ENCODE measurements at regions of chr1 and their contacts with region 1.

Region 1: GRCh38 chr1:61049850-61050540 is 32.4 kb upstream of the NFIA start:
- DNase-seq: peak; percentile 97
- H3K4me3 ChIP-seq: peak overlapping the region; percentile 66 to 94 (median 90)
- H3K27ac ChIP-seq: peak overlapping the region; percentile 94 to 99 (median 98)
- H3K4me1 ChIP-seq: peaks cover 0 to 41% (median 35%) of the 10 kb centered on the region in 4 donors
- H3K27me3 ChIP-seq: no peaks in the 10 kb centered on the region
- CTCF ChIP-seq: peak; percentile 93 to 96 (median 96)
- EP300 ChIP-seq: no peak
- POLR2A ChIP-seq: peak; percentile 27 to 36

Region 2: DNA sequence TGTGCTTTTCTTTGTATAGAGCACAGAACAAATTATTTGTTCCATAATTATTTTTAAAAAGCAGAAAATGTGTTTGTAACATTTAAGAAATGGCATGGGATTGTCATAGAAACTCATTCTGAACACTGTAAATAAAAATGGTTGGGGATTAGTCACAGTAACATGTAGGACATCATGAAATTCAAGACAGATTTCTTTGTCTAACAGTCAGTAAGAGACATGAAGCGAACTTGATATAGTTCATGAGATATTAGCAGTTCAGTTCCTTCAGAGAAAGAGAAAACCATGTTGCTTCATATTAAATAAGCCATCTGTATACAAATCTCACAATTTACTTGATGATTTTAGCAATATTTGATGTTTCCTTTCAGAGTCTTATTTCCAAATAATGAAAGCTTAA is 52.0 kb after region 1 on chr1:
- intact Hi-C with region 1: no loop called
- DNase-seq: no peak
- H3K4me3 ChIP-seq: peak overlapping the region in 2 of 4 donors; percentile 1 to 11
- H3K27ac ChIP-seq: peak overlapping the region; percentile 38 to 64 (median 48)
- H3K4me1 ChIP-seq: peaks cover 0 to 39% (median 22%) of the 10 kb centered on the region in 4 donors
- H3K27me3 ChIP-seq: no peaks in the 10 kb centered on the region
- CTCF ChIP-seq: no peak
- EP300 ChIP-seq: no peak
- POLR2A ChIP-seq: no peak

Region 3: GRCh38 chr1:61244114-61244513 is 194.1 kb after region 1 on chr1:
- intact Hi-C with region 1: loop called (anchors 2 kb)
- DNase-seq: no peak
- H3K4me3 ChIP-seq: no peak overlapping the region
- H3K27ac ChIP-seq: peak overlapping the region; percentile 77 to 87 (median 83)
- H3K4me1 ChIP-seq: peaks cover 0 to 66% (median 49%) of the 10 kb centered on the region in 4 donors
- H3K27me3 ChIP-seq: no peaks in the 10 kb centered on the region
- CTCF ChIP-seq: no peak
- EP300 ChIP-seq: no peak
- POLR2A ChIP-seq: no peak

Region 4: DNA sequence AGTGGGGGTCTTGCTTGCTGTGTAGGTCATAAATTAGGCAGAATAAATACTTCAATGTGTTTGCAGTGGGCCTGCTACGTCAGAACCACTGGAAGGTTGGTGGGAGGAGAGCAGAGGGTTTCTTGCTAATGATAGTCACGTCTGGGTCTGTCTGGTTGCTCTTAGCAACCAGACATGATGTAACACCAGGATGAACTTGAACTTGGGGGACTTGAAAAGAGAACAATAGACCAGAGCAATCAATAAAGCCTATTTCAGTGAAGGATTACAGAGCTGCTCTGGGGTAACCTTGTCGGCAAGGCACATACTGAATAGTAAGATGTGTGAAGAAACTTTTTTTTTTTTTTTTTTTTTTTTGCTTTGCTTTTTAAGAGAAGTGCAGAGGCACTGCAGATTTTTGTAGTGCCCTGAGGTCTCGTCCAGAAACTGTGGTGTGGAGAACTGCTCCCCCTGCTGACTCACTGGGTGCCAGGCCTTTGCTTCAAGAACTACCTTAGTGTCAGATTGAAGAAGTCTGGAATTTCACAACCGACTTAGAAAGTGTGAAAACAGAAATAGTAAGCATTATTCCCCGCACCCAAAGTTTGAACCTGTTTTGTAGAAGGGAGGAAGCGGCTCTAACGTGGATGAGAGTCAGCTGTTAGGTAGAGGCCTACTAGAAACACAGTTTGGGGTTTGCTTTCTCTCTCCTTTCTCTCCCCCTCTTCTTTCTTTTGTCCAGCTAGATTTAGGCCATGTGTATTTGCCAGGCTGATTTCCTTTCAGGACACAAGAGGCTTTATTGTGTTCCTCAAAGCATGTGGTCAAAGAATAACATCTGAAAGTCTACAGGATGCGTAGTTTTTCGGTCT is 403.3 kb after region 1 on chr1:
- intact Hi-C with region 1: loop called (anchors 2 kb)
- DNase-seq: peak; percentile 97
- H3K4me3 ChIP-seq: peak overlapping the region in 1 of 4 donors; percentile 3
- H3K27ac ChIP-seq: peak overlapping the region; percentile 70 to 80 (median 76)
- H3K4me1 ChIP-seq: peaks cover 0 to 57% (median 50%) of the 10 kb centered on the region in 4 donors
- H3K27me3 ChIP-seq: no peaks in the 10 kb centered on the region
- CTCF ChIP-seq: peak; percentile 54 to 64 (median 60)
- EP300 ChIP-seq: no peak
- POLR2A ChIP-seq: no peak

Region 5: GRCh38 chr1:61741711-61742619 is 692.0 kb after region 1 on chr1 and contains the start of gene PATJ:
- intact Hi-C with region 1: loop called (anchors 10 kb)
- DNase-seq: peak; percentile 76
- H3K4me3 ChIP-seq: peak within 1 kb of the TSS; percentile 65 to 98 (median 94)
- H3K27ac ChIP-seq: peak within 1 kb of the TSS; percentile 94 to 98 (median 97)
- H3K4me1 ChIP-seq: peaks cover 0 to 27% (median 19%) of the 10 kb centered on the region in 4 donors
- H3K27me3 ChIP-seq: no peaks in the 10 kb centered on the region
- CTCF ChIP-seq: no peak
- EP300 ChIP-seq: no peak
- POLR2A ChIP-seq: no peak
- total RNA-seq, gene PATJ: 21.3 to 33.2 (median 24.0) TPM